Mammary epithelial cell (primary cell): ENCODE measurements at regions of chr5 and their contacts with region 1.

Region 1: GRCh38 chr5:129852747-129853352 is 51.4 kb upstream of the CHSY3 start:
- DNase-seq: peak; percentile 52
- H3K4me3 ChIP-seq: no peak overlapping the region
- H3K27ac ChIP-seq: no peak overlapping the region
- H3K4me1 ChIP-seq: no peaks in the 10 kb centered on the region
- H3K27me3 ChIP-seq: peaks cover 2% of the 10 kb centered on the region
- CTCF ChIP-seq: peak; percentile 96 to 98

Region 2: GRCh38 chr5:129172580-129172979 is 680.3 kb before region 1 on chr5:
- CTCF ChIA-PET with region 1: no interaction called
- dilution Hi-C with region 1: no loop called
- in situ Hi-C with region 1: no loop called
- intact Hi-C with region 1: loop called (anchors 10 kb)
- DNase-seq: no peak
- H3K4me3 ChIP-seq: no peak overlapping the region
- H3K27ac ChIP-seq: no peak overlapping the region
- H3K4me1 ChIP-seq: no peaks in the 10 kb centered on the region
- H3K27me3 ChIP-seq: no peaks in the 10 kb centered on the region
- CTCF ChIP-seq: peak in 1 of 2 donors; percentile 21